Aorta (tissue), 5 donors: ENCODE measurements at regions of chr7 and their contacts with region 1.

Region 1: DNA sequence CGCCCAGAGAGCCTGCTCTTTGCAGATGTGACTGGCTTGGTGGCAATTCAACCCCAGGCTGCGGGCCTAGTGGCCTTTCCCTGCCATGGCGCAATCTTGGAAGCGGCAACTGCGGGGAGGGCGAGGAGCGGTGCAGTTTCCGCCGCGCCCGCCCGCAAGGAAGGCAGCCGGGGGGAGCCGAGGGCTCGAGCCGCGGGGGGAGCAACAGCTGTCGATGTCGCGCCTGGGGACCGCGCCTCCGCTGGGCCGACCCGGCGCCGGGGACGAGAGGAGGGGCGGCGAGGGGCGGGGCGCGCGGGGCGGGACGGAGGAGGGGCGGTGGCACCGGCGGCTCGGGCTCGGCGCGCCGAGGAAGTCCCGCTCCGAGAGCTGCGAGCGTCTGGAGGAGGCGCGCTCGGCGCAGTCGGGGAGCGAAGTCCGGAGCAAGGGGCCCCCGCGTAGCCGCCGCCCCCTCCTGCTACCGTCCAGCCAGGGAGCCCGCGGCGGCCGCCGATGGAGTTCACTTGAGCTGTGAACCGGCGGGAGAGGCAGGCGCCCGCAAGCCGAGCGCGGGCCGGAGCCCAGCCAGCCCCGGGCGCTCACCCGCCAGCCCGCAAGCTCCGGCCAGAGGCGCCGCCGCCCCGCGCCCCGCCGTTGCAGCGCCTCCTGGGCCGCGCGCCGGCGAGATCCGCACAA is 438.1 kb upstream of the GALNT17 start:
- DNase-seq: peak; percentile 80 to 95
- ATAC-seq: peak; percentile 87
- H3K4me3 ChIP-seq: peak overlapping the region; percentile 97 to 98
- H3K27ac ChIP-seq: peak overlapping the region; percentile 65 to 83
- H3K4me1 ChIP-seq: no peaks in the 10 kb centered on the region
- H3K27me3 ChIP-seq: no peaks in the 10 kb centered on the region

Region 2: DNA sequence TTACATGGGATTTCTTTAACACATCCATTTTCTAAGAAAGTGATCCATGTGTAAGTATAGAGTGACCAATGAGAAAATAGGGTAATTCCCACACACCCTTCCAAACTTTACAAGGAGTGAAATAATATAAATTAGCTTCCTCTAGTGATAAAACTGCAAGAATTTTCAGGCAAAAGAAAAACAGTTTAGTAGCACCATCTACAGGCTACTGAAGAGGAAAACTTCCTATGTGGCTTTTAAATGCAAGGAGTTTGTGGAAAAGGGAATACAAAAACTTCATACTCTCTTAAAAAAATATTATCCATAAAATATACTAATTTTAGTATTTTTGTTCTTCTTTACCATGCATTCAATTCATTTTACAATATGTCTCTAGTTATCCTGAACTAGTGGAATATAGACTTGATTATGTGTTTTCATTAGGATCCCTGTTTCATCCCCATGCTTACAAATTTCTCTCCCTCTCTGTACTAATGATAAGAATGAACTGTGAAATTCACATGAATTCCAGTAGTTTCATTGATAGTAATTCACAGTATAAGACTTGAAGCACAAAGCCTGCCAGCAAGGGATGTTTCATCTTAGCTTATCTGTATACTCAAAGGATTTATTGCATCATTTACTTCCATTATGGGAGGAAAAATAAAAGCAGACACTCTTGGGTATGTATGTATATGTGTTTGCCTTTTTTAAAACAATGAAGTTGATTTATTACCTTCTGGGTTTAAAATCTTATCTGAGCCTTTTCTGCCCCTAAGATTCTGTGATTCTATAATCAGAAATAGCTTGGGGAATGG is 652.7 kb before region 1 on chr7:
- intact Hi-C with region 1: loop called in 1 of 2 experiments (anchors 5 kb)
- DNase-seq: no peak
- ATAC-seq: no peak
- H3K4me3 ChIP-seq: no peak overlapping the region
- H3K27ac ChIP-seq: no peak overlapping the region
- H3K4me1 ChIP-seq: peaks cover 0 to 3% of the 10 kb centered on the region in 2 donors
- H3K27me3 ChIP-seq: no peaks in the 10 kb centered on the region

Region 3: DNA sequence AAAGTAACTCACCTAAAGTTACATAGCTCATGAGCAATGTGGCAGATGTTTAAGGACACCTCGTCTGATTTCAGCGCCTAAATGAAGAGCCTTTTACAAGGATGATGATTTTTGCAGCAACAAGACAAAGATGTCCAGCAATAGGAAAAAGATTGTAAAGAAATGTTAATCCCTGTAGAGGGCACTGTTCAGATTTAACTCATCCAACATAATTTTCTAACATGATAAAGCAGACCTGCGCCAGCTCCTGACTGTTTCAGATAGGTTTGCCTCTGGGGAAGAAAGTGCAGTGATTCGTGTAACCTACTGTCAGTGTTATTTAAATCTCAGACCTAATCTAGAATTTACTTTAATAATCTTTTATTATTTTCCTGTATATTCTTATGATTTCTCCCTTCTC is 500.3 kb before region 1 on chr7:
- intact Hi-C with region 1: loop called (anchors 5 kb)
- DNase-seq: no peak
- ATAC-seq: no peak
- H3K4me3 ChIP-seq: no peak overlapping the region
- H3K27ac ChIP-seq: no peak overlapping the region
- H3K4me1 ChIP-seq: no peaks in the 10 kb centered on the region
- H3K27me3 ChIP-seq: no peaks in the 10 kb centered on the region

Region 4: GRCh38 chr7:70384891-70385290 is 308.9 kb before region 1 on chr7:
- intact Hi-C with region 1: loop called (anchors 5 kb)
- DNase-seq: no peak
- ATAC-seq: no peak
- H3K4me3 ChIP-seq: no peak overlapping the region
- H3K27ac ChIP-seq: peak overlapping the region in 1 of 2 donors; percentile 18
- H3K4me1 ChIP-seq: peaks cover 8 to 18% of the 10 kb centered on the region in 2 donors
- H3K27me3 ChIP-seq: no peaks in the 10 kb centered on the region

Region 5: GRCh38 chr7:70392256-70392876 is 301.5 kb before region 1 on chr7:
- intact Hi-C with region 1: loop called (anchors 5 kb)
- DNase-seq: no peak
- ATAC-seq: peak; percentile 78
- H3K4me3 ChIP-seq: no peak overlapping the region
- H3K27ac ChIP-seq: peak overlapping the region; percentile 72 to 99
- H3K4me1 ChIP-seq: peaks cover 12 to 26% of the 10 kb centered on the region in 2 donors
- H3K27me3 ChIP-seq: no peaks in the 10 kb centered on the region